Cardiac septum (tissue), 1 donor: ENCODE measurements at regions of chr11 and their contacts with region 1.

Region 1: DNA sequence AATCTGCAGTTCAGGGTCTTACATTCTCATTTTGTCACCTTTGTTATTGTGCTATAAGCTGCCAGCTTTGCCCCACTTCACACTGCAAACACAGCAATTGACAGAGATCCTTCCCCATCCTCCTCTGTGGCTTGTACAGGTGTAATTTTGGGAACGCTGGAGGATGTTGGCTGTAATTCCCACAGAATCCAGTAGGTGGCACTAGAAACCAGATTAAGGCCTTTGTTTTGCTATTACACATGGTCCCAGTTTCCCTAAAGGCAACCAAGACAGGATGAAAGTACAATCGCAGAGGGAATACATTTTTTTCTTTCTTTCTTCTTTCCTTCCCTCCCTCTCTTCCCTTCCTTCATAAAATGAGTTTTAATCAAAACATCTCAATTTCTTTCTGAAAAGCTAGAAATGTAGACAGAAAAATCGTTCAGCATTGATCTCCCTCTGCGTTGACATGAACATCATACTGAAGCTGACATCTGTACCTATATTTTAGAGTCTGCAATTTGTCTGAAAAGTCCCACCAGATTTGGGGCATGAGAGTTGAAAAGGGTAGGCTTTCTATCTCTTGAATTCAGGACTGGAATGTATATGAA is 21.3 kb upstream of the NELL1 start:
- DNase-seq: no peak

Region 2: GRCh38 chr11:20035701-20036620 is 612.1 kb before region 1 on chr11:
- intact Hi-C with region 1: no loop called
- DNase-seq: no peak

Region 3: GRCh38 chr11:20712912-20713311 is 64.8 kb after region 1 on chr11:
- intact Hi-C with region 1: no loop called
- DNase-seq: no peak

Region 4: DNA sequence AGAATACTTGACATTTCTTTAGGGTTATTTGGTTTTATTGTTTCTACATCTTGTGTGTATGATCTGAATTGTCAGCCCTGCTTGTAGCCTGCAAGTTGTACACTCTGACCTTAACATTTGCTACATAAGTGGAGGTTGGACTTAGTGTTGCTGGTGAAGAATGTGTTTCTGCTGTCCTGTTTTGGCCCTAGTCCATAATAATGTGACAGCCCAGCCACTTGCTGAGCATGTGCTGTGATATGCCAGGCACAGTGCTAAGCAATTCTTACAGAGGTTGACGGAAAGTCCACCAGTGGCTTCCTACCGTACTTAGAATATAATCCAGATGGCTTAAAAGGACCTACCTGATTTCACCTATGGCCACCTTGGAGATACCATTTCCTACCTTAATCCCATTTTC is 547.9 kb after region 1 on chr11:
- intact Hi-C with region 1: no loop called
- DNase-seq: no peak

Region 5: GRCh38 chr11:22157531-22158200 is 1509.6 kb after region 1 on chr11:
- intact Hi-C with region 1: loop called (anchors 10 kb)
- DNase-seq: no peak